ENCODE measurements at regions of chr3 and their contacts with region 1.

Region 1: DNA sequence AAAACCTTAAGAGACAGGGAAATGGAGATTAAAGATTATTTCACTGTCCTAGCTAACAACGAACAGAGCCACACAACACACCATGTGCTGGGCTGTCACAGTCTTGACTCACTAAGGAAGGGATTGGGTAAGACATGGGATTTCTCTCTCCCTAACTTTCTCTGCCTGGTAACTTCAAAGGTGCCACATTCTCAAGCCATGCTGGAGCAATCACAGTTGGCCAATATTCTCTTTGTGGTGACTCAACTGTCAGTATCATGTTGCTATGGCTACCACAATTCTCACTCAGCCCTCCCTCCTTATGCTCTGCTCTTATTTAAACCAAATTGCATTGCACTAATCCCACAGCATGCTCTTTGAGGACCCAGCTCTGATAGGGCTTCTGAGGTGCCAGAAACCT is 74.0 kb downstream of the OXNAD1 start:
- DNase-seq: peak in 1 of 9 donors; percentile 29
- ATAC-seq: peak; percentile 76
- H3K4me3 ChIP-seq: no peak overlapping the region
- H3K4me3 Mint-ChIP-seq: peak overlapping the region in 7 of 10 donors; percentile 0 to 70 (median 46)
- H3K27ac ChIP-seq: peak overlapping the region; percentile 62
- H3K27ac Mint-ChIP-seq: peak overlapping the region; percentile 69 to 92 (median 81)
- H3K4me1 ChIP-seq: peaks cover 22% of the 10 kb centered on the region in 2 donors
- H3K4me1 Mint-ChIP-seq: peaks cover 48 to 87% (median 81%) of the 10 kb centered on the region in 7 donors
- H3K27me3 ChIP-seq: no peaks in the 10 kb centered on the region
- H3K27me3 Mint-ChIP-seq: no peaks in the 10 kb centered on the region

Region 2: DNA sequence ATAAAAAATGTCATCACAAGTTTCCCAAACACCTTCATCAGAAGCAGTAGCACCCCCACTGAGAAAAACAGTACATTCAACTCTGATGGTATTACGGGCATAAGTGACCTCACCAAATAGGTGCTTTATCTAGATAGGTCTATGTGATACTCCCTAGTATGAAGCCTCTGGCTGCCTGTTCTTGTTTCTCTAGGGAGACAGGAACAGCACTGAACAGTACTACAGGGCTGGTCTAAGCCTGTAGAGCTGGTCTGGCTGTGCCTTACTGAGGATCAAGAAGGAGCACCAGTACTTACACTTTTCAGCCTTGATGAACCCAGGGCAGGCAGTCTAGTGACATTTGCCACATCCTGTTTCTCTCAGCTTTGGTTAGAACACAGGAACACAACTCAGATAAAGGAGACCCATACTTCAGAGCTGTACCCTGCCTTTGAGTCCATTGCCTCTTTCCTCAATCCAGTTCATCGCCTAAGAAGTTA is 38.1 kb before region 1 on chr3:
- CTCF ChIA-PET with region 1: no interaction called
- POLR2A ChIA-PET with region 1: interaction called, 7 read pairs
- intact Hi-C with region 1: loop called in 1 of 2 experiments (anchors 5 kb)
- DNase-seq: peak in 7 of 9 donors; percentile 68 to 86 (median 82)
- ATAC-seq: peak; percentile 86
- H3K4me3 ChIP-seq: peak overlapping the region; percentile 48
- H3K4me3 Mint-ChIP-seq: peak overlapping the region; percentile 78 to 96 (median 92)
- H3K27ac ChIP-seq: peak overlapping the region; percentile 66
- H3K27ac Mint-ChIP-seq: peak overlapping the region; percentile 86 to 98 (median 94)
- H3K4me1 ChIP-seq: peaks cover 78 to 95% of the 10 kb centered on the region in 2 donors
- H3K4me1 Mint-ChIP-seq: peaks cover 61 to 99% (median 96%) of the 10 kb centered on the region in 7 donors
- H3K27me3 ChIP-seq: no peaks in the 10 kb centered on the region
- H3K27me3 Mint-ChIP-seq: no peaks in the 10 kb centered on the region

Region 3: GRCh38 chr3:16370872-16371740 is 32.1 kb after region 1 on chr3:
- CTCF ChIA-PET with region 1: no interaction called
- POLR2A ChIA-PET with region 1: no interaction called
- intact Hi-C with region 1: loop called in 1 of 2 experiments (anchors 5 kb)
- DNase-seq: no peak
- ATAC-seq: no peak
- H3K4me3 ChIP-seq: no peak overlapping the region
- H3K4me3 Mint-ChIP-seq: peak overlapping the region in 6 of 10 donors; percentile 4 to 49 (median 20)
- H3K27ac ChIP-seq: no peak overlapping the region
- H3K27ac Mint-ChIP-seq: peak overlapping the region; percentile 34 to 91 (median 82)
- H3K4me1 ChIP-seq: peaks cover 0 to 33% of the 10 kb centered on the region in 2 donors
- H3K4me1 Mint-ChIP-seq: peaks cover 33 to 86% (median 80%) of the 10 kb centered on the region in 7 donors
- H3K27me3 ChIP-seq: no peaks in the 10 kb centered on the region
- H3K27me3 Mint-ChIP-seq: no peaks in the 10 kb centered on the region

Region 4: DNA sequence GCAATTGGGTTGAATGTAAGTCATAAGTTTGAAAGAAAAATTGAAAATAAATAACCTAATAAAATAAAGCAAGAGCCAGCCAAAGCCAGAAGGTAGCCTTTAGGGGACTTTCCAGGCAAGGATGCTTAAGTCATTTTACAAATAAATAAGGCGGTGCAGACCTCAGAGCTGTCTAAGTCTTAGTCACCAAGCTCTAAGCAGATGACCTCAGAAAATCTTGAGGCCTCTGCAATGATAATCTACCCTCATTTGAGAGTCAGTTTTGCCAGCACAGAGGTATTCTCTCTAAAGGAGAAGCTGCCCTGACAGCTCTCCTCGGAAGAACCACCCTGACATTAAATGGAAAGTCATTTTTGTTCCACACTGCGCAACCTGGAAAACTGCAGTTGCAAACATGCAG is 39.9 kb after region 1 on chr3:
- CTCF ChIA-PET with region 1: interaction called, 3 read pairs
- POLR2A ChIA-PET with region 1: interaction called, 3 read pairs
- intact Hi-C with region 1: loop called (anchors 1 to 5 kb)
- DNase-seq: no peak
- ATAC-seq: peak; percentile 19
- H3K4me3 ChIP-seq: no peak overlapping the region
- H3K4me3 Mint-ChIP-seq: peak overlapping the region in 8 of 10 donors; percentile 26 to 85 (median 42)
- H3K27ac ChIP-seq: no peak overlapping the region
- H3K27ac Mint-ChIP-seq: peak overlapping the region in 8 of 9 donors; percentile 54 to 94 (median 90)
- H3K4me1 ChIP-seq: peaks cover 28 to 60% of the 10 kb centered on the region in 2 donors
- H3K4me1 Mint-ChIP-seq: peaks cover 52 to 98% (median 87%) of the 10 kb centered on the region in 7 donors
- H3K27me3 ChIP-seq: no peaks in the 10 kb centered on the region
- H3K27me3 Mint-ChIP-seq: no peaks in the 10 kb centered on the region

Measured in naive thymus-derived CD4-positive, alpha-beta T cell (primary cell).